Activated T-helper 2 cell treated with anti-CD3 and anti-CD28 coated beads, Interferon-gamma antibody, Interleukin-2, Interleukin-4, amounts not matched to agents 10 μg/mL and 5 μg/mL and 100 μg/mL, durations not matched to agents 14 hours and 24 hours and 36 hours (primary cell): ENCODE measurements at regions of chr6 and their contacts with region 1.

Region 1: DNA sequence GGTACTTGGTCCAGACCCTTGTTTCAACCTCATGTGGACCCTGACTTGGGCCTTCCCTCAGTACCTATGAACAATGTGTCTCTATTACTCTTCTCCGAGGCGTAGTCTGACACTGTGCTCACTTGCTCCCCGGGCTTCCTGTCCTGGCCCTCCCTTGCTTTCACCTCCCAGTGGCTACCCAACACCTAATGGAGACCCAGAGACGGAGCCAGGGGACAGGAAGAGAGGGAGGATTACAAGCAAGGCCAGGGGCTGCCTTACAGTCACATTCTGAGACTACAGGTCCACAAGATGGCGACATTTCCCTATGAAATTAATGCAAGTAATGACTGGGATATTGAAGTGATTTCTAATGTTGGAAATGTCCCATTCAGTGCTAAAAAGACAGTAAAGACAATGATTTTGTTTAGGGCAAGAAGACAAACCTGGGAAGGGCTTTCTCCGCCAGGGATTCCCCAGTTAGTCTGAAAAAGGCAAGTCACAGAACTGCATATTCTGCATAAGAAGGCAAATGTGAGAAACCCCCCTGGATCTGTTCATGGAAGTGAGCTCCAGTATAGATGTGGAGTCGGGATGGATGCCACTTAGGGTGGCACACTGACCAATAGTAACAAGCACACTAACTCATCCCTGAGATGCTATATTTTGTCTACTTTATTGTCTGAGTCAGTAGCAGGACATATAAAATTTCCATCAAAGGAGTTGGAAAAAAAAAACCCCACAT is 44.0 kb upstream of the ZBTB24 start:
- DNase-seq: peak; percentile 28
- H3K4me3 Mint-ChIP-seq: no peak overlapping the region
- H3K27ac Mint-ChIP-seq: no peak overlapping the region
- H3K4me1 Mint-ChIP-seq: peaks cover 4% of the 10 kb centered on the region
- H3K27me3 Mint-ChIP-seq: no peaks in the 10 kb centered on the region

Region 2: GRCh38 chr6:109491207-109491938 is 35.7 kb before region 1 on chr6:
- intact Hi-C with region 1: loop called (anchors 5 kb)
- DNase-seq: peak; percentile 57
- H3K4me3 Mint-ChIP-seq: peak overlapping the region; percentile 58
- H3K27ac Mint-ChIP-seq: peak overlapping the region; percentile 94
- H3K4me1 Mint-ChIP-seq: peaks cover 51% of the 10 kb centered on the region
- H3K27me3 Mint-ChIP-seq: no peaks in the 10 kb centered on the region

Region 3: DNA sequence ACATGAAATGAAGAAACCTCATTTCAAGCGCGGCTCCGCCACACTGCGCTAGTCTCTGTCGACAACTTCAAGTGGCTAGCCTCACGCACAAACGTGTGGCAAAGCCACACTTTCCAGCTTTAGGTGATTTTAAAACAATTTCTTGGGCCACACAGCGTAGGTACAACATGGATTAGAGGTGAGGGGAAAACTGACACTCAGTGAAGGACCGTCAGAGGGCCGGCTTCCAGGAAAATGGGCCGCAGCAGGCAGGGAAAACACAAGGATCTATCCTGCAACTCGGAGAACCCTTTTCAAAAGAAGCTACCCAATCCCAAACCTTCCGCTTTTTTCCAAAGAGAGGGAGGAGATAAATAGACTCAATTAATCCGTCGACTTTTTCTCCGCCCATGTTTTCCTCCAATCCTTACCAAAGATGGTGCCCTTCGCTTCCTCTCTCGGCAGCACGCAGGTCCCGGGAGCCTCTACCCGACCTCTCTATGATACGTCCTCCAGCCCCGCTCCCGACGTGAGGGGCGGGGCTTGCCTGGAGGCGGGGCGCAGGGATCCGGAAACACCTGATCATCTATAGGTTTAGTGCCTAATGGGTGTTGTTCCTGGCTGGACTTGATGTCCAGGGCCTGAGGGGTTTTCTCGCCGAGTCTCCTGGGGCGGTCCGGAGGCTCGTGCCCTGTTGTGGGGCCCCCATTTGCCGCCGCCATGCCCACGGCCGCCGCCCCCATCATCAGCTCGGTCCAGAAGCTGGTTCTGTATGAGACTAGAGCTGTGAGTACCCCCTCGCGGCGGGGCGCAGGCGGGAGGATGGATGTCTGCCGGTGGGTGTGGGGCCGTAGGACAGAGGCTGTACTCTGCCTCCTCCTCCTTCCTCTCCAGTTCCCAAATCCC is 163.9 kb after region 1 on chr6 and contains the starts of genes AK9 and FIG4:
- intact Hi-C with region 1: loop called (anchors 5 kb)
- DNase-seq: peak; percentile 84
- H3K4me3 Mint-ChIP-seq: peak within 1 kb of the TSS; percentile 96
- H3K27ac Mint-ChIP-seq: peak within 1 kb of the TSS; percentile 86
- H3K4me1 Mint-ChIP-seq: peaks cover 26% of the 10 kb centered on the region
- H3K27me3 Mint-ChIP-seq: peaks cover 10% of the 10 kb centered on the region
- total RNA-seq, gene AK9: 3.1 and 3.8 TPM in 2 replicates
- total RNA-seq, gene FIG4: 8.8 and 9.5 TPM in 2 replicates

Region 4: GRCh38 chr6:109705258-109705657 is 178.2 kb after region 1 on chr6:
- intact Hi-C with region 1: loop called (anchors 1 kb)
- DNase-seq: peak; percentile 65
- H3K4me3 Mint-ChIP-seq: no peak overlapping the region
- H3K27ac Mint-ChIP-seq: no peak overlapping the region
- H3K4me1 Mint-ChIP-seq: peaks cover 2% of the 10 kb centered on the region
- H3K27me3 Mint-ChIP-seq: peaks cover 2% of the 10 kb centered on the region

Region 5: GRCh38 chr6:110039364-110039980 is 512.4 kb after region 1 on chr6:
- intact Hi-C with region 1: loop called (anchors 1 kb)
- DNase-seq: peak; percentile 73
- H3K4me3 Mint-ChIP-seq: peak overlapping the region; percentile 76
- H3K27ac Mint-ChIP-seq: peak overlapping the region; percentile 73
- H3K4me1 Mint-ChIP-seq: peaks cover 17% of the 10 kb centered on the region
- H3K27me3 Mint-ChIP-seq: peaks cover 2% of the 10 kb centered on the region

Region 6: DNA sequence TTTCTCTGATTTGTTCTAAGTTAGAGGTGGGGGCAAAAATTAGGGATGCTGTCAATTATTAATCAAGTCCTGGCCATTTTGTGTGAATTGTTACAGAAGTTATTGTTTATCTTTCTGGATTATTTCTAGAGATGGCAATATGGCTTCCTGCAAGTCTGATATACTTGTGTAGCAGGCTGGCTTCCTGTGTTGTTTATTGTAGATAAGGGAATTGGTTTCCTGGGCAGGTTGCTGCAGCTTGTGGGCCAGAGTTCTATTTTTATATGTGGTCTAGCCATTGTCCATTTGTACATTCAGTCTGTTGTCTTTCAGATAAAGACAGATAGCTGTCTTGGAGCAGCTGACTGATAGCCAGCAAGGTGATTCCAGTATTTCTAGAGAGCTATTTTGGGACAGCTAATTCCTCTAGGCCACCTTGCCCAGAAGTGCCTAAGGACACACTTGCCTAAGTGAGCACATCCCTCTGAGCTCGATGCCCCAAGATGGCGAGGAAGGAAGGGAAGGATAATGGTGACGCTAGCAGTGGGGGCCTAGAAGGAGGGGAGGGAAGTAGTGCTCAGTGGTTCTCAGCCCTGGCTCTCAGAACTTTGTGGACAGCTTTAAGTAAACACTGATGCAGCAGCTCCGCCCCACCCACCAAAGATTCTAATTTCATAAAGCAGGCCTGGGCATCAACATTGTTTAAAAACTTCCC is 862.8 kb after region 1 on chr6:
- intact Hi-C with region 1: loop called (anchors 5 kb)
- DNase-seq: no peak
- H3K4me3 Mint-ChIP-seq: no peak overlapping the region
- H3K27ac Mint-ChIP-seq: no peak overlapping the region
- H3K4me1 Mint-ChIP-seq: peaks cover 17% of the 10 kb centered on the region
- H3K27me3 Mint-ChIP-seq: no peaks in the 10 kb centered on the region